Activated CD4-positive, alpha-beta memory T cell treated with anti-CD3 and anti-CD28 coated beads, Interleukin-2, amount 10 ng/mL, durations not matched to agents 7 days and 5 days (primary cell): ENCODE measurements at regions of chr12 and their contacts with region 1.

Region 1: GRCh38 chr12:9647825-9648700 is 21.4 kb upstream of the CLEC2D start:
- DNase-seq: peak; percentile 97
- H3K4me3 Mint-ChIP-seq: peak overlapping the region; percentile 95
- H3K27ac Mint-ChIP-seq: peak overlapping the region; percentile 94
- H3K4me1 Mint-ChIP-seq: peaks cover 51% of the 10 kb centered on the region
- H3K27me3 Mint-ChIP-seq: no peaks in the 10 kb centered on the region

Region 2: GRCh38 chr12:9597365-9597764 is 50.7 kb before region 1 on chr12:
- CTCF ChIA-PET with region 1: no interaction called
- POLR2A ChIA-PET with region 1: no interaction called
- DNase-seq: no peak
- H3K4me3 Mint-ChIP-seq: no peak overlapping the region
- H3K27ac Mint-ChIP-seq: no peak overlapping the region
- H3K4me1 Mint-ChIP-seq: no peaks in the 10 kb centered on the region
- H3K27me3 Mint-ChIP-seq: no peaks in the 10 kb centered on the region

Region 3: GRCh38 chr12:9615420-9616136 is 32.5 kb before region 1 on chr12:
- CTCF ChIA-PET with region 1: no interaction called
- POLR2A ChIA-PET with region 1: interaction called, 40 read pairs
- DNase-seq: peak; percentile 23
- H3K4me3 Mint-ChIP-seq: peak overlapping the region; percentile 65
- H3K27ac Mint-ChIP-seq: peak overlapping the region; percentile 94
- H3K4me1 Mint-ChIP-seq: peaks cover 66% of the 10 kb centered on the region
- H3K27me3 Mint-ChIP-seq: no peaks in the 10 kb centered on the region

Region 4: DNA sequence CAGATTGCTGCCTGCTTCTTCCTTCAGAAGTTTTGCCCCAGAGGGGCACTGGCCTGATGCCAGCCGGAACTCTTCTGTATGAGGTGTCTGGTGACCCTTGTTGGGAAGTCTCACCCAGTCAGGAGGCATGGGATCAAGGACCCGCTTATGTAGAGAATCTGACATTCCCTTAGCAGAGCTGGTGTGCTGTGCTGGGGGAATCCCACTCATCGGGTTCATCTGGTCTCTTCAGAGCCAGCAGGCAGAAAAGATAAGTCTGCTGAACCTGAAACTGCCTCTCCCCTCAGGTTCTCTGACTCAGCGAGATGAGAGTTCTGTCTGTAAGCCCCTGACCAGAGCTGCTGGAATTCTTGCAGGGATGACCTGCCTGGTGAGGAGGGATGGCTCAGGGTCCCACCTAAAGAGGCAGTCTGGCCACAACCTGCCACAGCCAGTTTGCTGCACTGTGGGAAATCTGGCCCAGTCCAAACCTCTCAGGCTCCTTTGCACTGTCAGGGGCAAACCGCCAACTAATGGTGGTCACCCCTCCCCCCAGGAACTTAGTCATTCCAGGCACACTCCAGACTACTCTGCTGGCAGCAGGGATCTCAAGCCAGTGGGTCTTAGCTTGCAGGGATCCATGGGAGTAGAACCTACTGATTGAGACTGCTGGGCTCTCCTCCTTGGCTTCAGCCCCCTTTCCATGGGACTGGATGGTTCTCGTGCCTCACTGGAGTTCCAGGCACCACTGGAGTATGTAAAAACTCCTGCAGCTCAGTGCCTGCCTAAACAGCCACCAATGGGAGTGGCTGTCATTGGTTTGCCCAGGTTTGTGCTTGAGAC is 25.6 kb after region 1 on chr12:
- CTCF ChIA-PET with region 1: interaction called, 27 read pairs
- POLR2A ChIA-PET with region 1: interaction called, 1,071 read pairs
- DNase-seq: peak; percentile 75
- H3K4me3 Mint-ChIP-seq: peak overlapping the region; percentile 92
- H3K27ac Mint-ChIP-seq: peak overlapping the region; percentile 98
- H3K4me1 Mint-ChIP-seq: peaks cover 41% of the 10 kb centered on the region
- H3K27me3 Mint-ChIP-seq: no peaks in the 10 kb centered on the region

Region 5: DNA sequence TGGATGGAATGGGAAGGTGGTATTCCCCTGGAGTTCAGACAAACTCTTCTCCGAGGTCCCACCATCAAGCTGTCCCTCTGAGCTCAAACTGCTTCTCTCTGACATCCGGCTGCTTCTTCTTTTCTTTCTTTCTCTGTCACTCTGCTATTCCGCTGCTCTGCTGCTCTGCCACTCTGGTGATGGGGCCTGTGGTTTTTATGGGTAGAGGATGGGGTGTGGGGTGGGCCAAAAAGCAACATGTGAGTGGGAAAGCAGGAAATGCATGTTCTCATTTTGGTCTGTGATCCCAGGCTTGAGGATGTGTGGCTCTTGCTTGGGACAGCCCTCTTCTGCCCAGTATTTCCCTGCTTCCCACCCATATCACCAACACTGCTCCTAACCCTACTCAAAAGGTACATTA is 54.2 kb after region 1 on chr12:
- CTCF ChIA-PET with region 1: no interaction called
- POLR2A ChIA-PET with region 1: interaction called, 26 read pairs
- DNase-seq: peak; percentile 75
- H3K4me3 Mint-ChIP-seq: peak overlapping the region; percentile 43
- H3K27ac Mint-ChIP-seq: peak overlapping the region; percentile 85
- H3K4me1 Mint-ChIP-seq: peaks cover 72% of the 10 kb centered on the region
- H3K27me3 Mint-ChIP-seq: no peaks in the 10 kb centered on the region

Region 6: DNA sequence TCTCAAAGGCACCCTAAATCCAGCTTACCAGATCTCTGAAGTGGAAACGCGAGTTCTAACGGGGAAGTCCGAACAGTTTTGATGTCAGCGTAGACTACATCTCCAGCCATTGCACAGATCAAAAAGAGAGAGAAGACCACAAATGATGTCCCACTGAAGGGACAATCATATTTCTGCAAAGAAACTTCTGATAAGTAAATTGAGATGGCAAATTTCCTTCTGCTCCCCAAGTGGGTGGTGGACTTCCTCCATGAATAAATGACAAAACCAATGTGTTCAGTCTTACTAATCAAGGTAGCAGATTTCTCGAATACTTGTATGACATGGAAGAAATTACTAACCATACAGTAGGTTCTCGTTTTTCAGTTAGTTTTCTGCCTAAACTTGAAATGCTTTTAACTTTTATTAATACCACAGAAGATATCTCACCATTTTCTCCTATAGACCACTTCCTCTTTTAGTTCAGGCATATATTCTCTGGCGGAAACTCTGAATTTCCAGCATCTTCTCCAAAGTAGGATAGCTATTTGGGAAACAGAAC is 84.9 kb after region 1 on chr12 and contains the start of gene CLECL1:
- CTCF ChIA-PET with region 1: interaction called, 3 read pairs
- POLR2A ChIA-PET with region 1: interaction called, 194 read pairs
- DNase-seq: no peak
- H3K4me3 Mint-ChIP-seq: peak within 1 kb of the TSS; percentile 92
- H3K27ac Mint-ChIP-seq: peak within 1 kb of the TSS; percentile 94
- H3K4me1 Mint-ChIP-seq: peaks cover 62% of the 10 kb centered on the region
- H3K27me3 Mint-ChIP-seq: peaks cover 2% of the 10 kb centered on the region
- total RNA-seq, gene CLECL1: 13.5 to 15.4 TPM

Region 7: DNA sequence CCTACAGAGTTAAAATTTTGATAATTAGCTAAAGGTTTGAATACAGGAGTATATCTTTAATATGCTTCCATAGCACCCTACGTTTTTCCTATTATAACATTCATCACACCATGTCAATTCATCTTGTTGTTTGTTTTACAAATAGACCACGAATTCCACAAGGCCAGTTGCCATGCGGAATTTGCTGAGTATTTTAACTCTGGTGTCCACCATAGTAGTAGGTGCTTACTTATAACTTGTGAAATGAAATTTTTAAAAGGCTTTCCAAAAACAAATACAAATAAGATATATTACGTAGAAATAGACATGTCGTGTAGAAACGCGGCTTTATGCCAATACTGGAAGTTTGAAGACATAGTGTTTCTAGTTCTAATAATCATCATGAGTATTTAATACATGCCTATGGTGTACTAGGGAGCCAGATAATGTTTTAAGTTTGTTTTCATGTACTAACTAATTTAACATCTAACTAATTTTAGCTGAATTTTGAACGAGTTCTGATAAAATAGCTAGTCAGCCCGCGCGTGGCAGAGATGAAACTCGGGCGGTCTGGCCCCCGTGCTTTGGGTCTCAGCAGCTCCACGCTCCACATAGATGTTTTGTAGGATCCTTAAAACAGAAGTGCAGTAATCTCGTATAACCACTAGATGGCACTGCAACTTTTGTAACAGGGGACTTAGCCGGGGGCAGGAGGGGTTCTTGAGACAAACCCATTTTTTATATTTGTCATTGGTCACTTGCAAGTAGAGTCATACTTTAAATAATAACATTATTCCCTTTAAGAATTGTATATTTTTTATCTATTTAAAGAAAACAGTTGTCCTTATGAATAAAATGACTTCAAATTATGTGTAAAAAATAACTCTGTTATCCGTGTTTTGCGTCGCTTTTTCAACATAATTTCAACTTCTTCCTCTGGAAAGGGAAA is 102.5 kb after region 1 on chr12:
- CTCF ChIA-PET with region 1: no interaction called
- POLR2A ChIA-PET with region 1: interaction called, 259 read pairs
- DNase-seq: peak; percentile 61
- H3K4me3 Mint-ChIP-seq: peak overlapping the region; percentile 15
- H3K27ac Mint-ChIP-seq: peak overlapping the region; percentile 5
- H3K4me1 Mint-ChIP-seq: peaks cover 55% of the 10 kb centered on the region
- H3K27me3 Mint-ChIP-seq: no peaks in the 10 kb centered on the region

Region 8: GRCh38 chr12:9869307-9870161 is 221.5 kb after region 1 on chr12 and contains the start of gene CLEC2B:
- CTCF ChIA-PET with region 1: no interaction called
- POLR2A ChIA-PET with region 1: interaction called, 59 read pairs
- DNase-seq: no peak
- H3K4me3 Mint-ChIP-seq: peak within 1 kb of the TSS; percentile 85
- H3K27ac Mint-ChIP-seq: peak within 1 kb of the TSS; percentile 92
- H3K4me1 Mint-ChIP-seq: peaks cover 19% of the 10 kb centered on the region
- H3K27me3 Mint-ChIP-seq: no peaks in the 10 kb centered on the region
- total RNA-seq, gene CLEC2B: 79.6 to 79.7 TPM